Activated CD4-positive, alpha-beta memory T cell treated with anti-CD3 and anti-CD28 coated beads, Interleukin-2, amount 10 ng/mL, durations not matched to agents 7 days and 5 days (primary cell): ENCODE measurements at regions of chr2 and their contacts with region 1.

Region 1: DNA sequence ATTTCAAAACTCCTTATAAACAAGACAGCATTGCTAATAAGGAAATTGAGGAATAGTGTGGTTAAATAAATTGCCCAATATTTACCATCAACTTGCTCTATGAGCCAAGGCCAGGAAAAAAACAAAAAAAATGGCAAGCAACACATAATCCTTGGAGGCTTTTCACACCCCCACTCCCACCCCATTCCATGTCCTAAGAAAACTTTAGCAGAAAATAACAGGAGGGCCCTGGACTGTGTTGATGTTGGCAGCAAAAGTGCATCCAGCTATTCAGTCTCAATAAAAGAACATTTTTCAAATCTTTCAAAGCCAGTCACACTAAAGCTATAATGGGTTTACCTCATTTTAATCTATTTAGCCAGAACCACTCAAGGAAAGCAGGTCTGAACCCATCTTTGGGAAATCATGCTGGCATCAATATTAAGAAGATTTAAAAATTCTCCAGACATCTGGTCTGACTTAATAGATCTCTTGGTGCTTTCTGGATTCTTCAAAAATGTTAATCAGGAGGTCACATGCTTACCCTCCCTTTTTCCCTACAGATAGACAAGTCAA is 34.6 kb upstream of the STK17B start:
- DNase-seq: no peak
- H3K4me3 Mint-ChIP-seq: no peak overlapping the region
- H3K27ac Mint-ChIP-seq: no peak overlapping the region
- H3K4me1 Mint-ChIP-seq: peaks cover 41% of the 10 kb centered on the region
- H3K27me3 Mint-ChIP-seq: no peaks in the 10 kb centered on the region

Region 2: GRCh38 chr2:196012314-196012713 is 193.6 kb before region 1 on chr2:
- CTCF ChIA-PET with region 1: no interaction called
- POLR2A ChIA-PET with region 1: no interaction called
- DNase-seq: no peak
- H3K4me3 Mint-ChIP-seq: no peak overlapping the region
- H3K27ac Mint-ChIP-seq: no peak overlapping the region
- H3K4me1 Mint-ChIP-seq: no peaks in the 10 kb centered on the region
- H3K27me3 Mint-ChIP-seq: peaks cover 4% of the 10 kb centered on the region

Region 3: DNA sequence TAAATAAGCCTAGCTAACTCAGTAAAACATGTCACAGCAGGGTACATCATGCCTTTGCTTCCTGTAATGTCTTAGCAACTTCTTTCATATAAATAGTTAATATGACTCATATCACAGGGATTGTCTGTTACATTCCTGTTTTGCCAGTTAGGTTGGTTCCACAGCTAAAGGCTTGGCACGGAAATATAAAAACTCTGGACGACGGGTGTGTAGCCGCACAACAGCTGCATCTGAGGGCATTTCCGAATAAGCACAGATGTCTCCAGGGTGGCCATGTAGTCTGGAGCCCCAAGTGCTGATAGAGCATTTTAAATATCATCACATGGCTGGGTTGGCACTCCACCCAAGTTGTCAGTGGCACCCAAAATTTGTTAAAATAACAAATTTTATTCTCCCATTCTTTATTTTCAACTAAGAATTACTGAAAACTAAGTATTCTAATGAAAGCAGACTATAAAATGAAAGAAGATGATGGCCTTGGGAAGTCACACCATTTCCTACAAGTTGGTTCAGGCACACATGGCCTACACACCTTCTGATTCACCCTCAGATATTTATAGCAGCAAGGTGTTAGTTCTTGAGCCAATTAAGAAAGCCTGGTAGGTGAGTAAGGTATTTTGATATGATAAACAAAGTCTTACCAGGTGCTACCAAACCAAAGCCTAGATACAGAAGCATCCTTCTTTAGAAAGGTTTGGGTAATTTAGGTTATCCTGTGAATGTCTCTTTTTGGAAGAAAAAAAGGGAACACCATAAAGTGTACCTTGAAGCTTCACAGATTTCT is 27.3 kb after region 1 on chr2:
- CTCF ChIA-PET with region 1: interaction called, 3 read pairs
- POLR2A ChIA-PET with region 1: interaction called, 24 read pairs
- DNase-seq: no peak
- H3K4me3 Mint-ChIP-seq: no peak overlapping the region
- H3K27ac Mint-ChIP-seq: peak overlapping the region; percentile 85
- H3K4me1 Mint-ChIP-seq: peaks cover 91% of the 10 kb centered on the region
- H3K27me3 Mint-ChIP-seq: no peaks in the 10 kb centered on the region

Region 4: DNA sequence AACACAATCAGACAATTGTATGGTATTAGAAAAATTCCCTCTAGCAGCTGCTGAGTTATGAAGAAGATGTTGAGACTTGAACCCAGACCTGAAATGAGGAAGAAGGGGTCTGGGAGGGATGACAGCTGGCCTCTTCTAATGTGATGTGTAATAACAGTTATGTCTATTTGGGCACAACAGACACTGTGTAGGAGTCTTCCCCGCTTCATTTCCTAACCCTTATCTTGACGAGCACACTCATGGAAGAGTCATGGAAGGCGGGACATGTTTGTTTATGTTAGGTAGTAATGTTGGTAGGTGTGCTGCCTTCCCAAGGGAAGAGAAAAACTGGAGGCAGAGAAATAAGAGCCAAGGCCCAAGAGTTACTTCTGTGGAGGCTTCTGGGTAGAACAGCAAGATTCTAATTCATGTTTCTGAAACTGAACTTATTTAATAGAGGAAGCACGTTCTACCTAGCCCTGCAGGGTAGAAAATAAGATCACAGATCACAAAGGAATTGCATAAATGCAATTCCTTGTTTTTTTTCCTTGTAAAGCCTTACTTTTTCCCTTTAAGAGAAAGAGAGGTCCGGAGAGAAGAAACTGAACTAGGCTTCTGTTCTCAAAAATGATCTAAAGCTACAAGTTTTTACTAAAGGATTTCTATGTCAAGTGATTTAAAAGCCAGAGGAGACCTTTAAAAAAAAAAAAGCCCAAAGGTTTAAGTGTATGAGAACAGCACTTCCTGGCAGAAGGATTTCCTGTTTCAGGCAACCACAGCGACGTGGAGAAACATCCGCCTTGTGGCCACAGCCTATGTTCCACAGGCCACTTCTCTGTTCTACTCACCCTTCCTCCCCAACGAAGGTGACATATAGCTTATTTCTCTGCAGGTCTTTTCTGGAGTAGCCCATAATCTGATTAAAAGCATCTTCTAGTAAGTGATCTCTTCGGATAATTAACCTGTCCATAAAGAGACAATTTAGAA is 33.9 kb after region 1 on chr2:
- CTCF ChIA-PET with region 1: interaction called, 3 read pairs
- POLR2A ChIA-PET with region 1: interaction called, 26 read pairs
- DNase-seq: peak; percentile 93
- H3K4me3 Mint-ChIP-seq: peak overlapping the region; percentile 57
- H3K27ac Mint-ChIP-seq: peak overlapping the region; percentile 93
- H3K4me1 Mint-ChIP-seq: peaks cover 74% of the 10 kb centered on the region
- H3K27me3 Mint-ChIP-seq: no peaks in the 10 kb centered on the region